ENCODE measurements at regions of chr1 and their contacts with region 1.

Region 1: GRCh38 chr1:6401673-6402072 is 8.1 kb upstream of the ACOT7 start:
- DNase-seq: no peak
- H3K4me3 ChIP-seq: no peak overlapping the region
- CTCF ChIP-seq: no peak

Region 2: DNA sequence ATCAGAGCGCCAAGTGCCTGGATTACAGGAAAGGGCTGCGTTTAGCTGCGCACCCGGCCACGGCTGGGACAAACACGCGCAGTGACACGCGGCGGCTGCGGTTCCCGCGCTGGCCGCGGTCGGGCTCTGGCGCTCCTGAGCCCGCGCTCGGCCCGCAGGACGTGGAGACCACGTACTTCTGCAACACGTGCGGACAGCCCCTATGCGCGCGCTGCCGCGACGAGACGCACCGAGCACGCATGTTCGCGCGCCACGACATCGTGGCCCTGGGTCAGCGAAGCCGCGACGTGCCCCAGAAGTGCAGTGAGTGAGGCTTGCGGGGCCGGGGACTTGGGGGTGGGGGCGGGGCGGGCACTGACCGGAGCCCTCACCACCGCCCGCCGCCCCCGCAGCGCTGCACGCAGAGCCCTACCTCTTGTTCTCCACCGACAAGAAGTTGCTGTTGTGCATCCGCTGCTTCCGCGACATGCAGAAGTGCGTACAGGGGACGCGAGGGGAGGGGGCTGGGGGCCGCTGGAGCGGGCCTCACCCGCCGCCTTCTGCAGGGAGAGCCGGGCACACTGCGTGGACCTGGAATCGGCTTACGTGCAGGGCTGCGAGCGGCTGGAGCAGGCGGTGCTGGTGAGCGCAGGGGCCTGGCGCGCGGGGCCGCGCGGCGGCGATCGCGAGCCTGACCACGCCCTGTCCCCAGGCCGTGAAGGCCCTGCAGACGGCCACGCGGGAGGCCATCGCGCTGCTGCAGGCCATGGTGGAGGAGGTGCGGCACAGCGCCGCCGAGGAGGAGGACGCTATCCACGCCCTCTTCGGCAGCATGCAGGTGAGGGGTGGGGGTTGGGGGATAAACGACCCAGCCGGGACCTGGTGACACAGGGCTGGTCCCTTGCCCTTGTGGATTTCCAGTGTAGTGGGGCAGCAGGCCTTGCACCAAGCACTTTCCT is 192.7 kb before region 1 on chr1:
- CTCF ChIA-PET with region 1: no interaction called
- POLR2A ChIA-PET with region 1: no interaction called
- DNase-seq: no peak
- H3K4me3 ChIP-seq: peak overlapping the region; percentile 57
- CTCF ChIP-seq: peak; percentile 56

Region 3: DNA sequence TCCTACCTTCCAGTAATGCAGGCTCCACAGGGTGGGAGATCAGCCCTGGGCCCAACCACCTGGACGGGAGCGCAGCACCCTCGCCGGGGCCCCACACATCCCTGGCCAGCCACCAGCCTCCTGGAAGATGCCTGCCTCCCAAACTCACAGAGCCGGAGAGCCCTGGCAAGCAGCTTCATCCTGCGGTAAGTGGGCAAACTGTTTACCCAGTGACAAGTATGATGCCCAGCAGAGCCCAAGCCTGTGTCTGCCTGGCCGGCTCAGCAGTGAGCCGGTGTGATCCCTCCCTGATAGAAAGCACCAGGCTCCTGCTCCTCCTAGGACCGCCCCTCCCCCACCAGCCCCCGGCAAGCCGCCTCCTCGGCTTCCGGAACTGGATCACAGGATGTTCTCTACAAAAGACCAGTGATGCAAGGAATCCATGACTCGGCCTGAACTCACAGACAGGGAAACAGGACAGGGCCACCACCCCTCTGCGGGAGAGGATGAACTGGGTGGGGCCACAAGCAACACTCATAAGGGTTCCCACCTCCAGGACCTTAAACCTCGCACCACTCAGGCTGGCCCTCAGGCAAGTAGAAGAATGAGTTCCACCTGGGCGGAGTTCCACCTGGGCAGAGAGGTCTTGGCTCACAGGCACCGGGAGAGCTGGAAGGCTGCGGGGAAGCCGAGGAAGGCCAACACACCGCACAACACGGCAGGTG is 16.0 kb before region 1 on chr1:
- CTCF ChIA-PET with region 1: interaction called, 52 read pairs
- POLR2A ChIA-PET with region 1: no interaction called
- DNase-seq: no peak
- H3K4me3 ChIP-seq: no peak overlapping the region; the same call in 1 of the 2 replicates
- CTCF ChIP-seq: no peak

Region 4: DNA sequence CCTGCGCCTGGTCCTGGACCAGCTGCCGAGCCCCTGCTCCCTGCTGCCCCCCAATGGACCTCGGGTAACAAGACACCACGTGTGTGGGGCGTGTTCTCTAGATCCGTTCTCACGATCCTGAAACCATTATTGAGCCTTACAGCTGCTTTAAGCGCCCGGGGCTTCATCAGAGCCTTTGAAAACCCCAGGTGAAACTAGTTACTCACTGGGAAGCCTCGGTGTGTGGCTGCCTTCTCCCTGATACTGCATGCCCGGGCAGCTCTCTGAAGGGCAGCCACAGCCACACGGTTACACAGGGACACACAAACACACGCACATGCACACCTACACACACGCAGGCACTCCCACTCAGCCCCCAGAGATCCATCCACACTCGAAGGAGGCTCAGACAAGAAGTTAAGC is 12.8 kb after region 1 on chr1:
- CTCF ChIA-PET with region 1: interaction called, 31 read pairs
- POLR2A ChIA-PET with region 1: no interaction called
- DNase-seq: no peak
- H3K4me3 ChIP-seq: peak overlapping the region; percentile 27; the same call in 1 of the 2 replicates
- CTCF ChIP-seq: peak; percentile 73